Sigmoid colon (tissue), 7 donors: ENCODE measurements at regions of chr14 and their contacts with region 1.

Region 1: DNA sequence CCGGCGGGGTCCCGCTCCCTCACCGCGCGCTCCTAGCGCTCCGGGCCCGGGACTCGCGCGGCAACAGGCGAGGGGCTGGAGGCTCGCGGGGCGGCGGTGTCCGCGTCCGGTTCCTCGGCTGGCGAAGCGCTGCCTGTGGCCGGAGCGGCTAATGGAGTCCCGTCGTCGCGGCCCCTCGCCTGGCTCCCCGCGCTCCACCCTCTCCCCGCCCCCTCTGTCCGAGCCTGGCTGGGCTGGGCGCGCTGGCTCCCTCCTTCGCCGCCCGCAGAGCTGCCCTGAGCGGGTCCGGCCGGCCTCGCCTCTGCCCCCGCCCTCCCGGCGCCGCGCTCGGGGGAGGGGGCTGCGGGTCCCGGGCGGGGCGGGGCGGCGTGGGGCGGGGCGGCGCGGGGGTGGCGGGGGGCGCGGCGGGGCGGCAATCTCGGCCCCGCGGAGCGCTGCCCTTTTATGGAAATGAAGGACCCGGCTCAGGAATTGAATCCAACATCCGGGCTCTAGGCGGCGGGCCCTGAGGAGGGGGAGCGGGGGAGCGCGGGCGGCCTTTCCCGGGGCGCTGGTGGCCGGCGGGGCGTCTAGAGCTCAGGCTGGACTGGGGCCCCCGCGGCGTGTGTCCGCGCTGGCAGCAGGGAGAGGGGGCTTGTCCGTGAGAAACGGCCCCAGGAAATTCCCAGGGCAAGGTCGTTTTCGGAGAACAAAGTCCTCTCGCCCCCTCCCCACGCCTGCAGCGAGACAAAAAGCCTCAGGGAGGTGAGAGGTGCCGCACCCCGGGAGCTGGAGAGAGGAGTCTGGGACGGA is at the start of gene FERMT2:
- DNase-seq: peak; percentile 96
- H3K4me3 ChIP-seq: peak within 1 kb of the TSS; percentile 73 to 98 (median 90)
- H3K27ac ChIP-seq: peak within 1 kb of the TSS; percentile 98 to 100 (median 99)
- H3K4me1 ChIP-seq: peaks cover 0 to 59% (median 45%) of the 10 kb centered on the region in 4 donors
- H3K27me3 ChIP-seq: no peaks in the 10 kb centered on the region
- CTCF ChIP-seq: no peak
- EP300 ChIP-seq: peak in 1 of 4 donors; percentile 46
- POLR2A ChIP-seq: peak; percentile 82 to 92
- total RNA-seq, gene FERMT2: 278 to 317 (median 297) TPM

Region 2: GRCh38 chr14:52678591-52678990 is 272.5 kb before region 1 on chr14:
- intact Hi-C with region 1: no loop called
- DNase-seq: no peak
- H3K4me3 ChIP-seq: no peak overlapping the region
- H3K27ac ChIP-seq: no peak overlapping the region
- H3K4me1 ChIP-seq: no peaks in the 10 kb centered on the region
- H3K27me3 ChIP-seq: no peaks in the 10 kb centered on the region
- CTCF ChIP-seq: peak in 1 of 4 experiments; percentile 12
- EP300 ChIP-seq: no peak
- POLR2A ChIP-seq: no peak

Region 3: GRCh38 chr14:52706724-52707706 is 244.1 kb before region 1 on chr14 and contains the start of gene PSMC6:
- intact Hi-C with region 1: loop called (anchors 10 kb)
- DNase-seq: peak; percentile 96
- H3K4me3 ChIP-seq: peak within 1 kb of the TSS; percentile 68 to 81 (median 74)
- H3K27ac ChIP-seq: peak within 1 kb of the TSS; percentile 86 to 87 (median 87)
- H3K4me1 ChIP-seq: peaks cover 0 to 29% (median 16%) of the 10 kb centered on the region in 4 donors
- H3K27me3 ChIP-seq: no peaks in the 10 kb centered on the region
- CTCF ChIP-seq: no peak
- EP300 ChIP-seq: peak in 1 of 4 donors; percentile 21
- POLR2A ChIP-seq: peak; percentile 16 to 67
- total RNA-seq, gene PSMC6: 60.7 to 94.2 (median 86.4) TPM

Region 4: DNA sequence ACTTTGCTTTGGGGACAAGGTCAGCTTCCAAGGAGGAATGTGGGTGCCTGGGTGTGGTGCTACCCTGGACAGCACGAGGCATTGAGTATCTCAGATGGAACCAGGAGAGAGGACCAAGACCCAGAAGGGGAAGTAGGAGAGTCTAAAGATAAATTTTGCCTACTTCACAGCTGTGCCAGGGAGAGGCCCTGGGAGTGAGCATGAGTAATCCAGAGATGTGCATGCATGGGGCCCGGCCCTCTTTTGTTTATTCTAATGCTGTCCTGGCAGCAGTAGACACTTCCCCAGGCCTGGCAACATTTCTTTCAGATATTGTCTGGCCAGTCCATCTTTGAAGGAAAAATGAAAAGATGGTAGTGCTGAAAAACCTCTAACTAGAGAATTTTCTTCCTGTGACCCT is 110.2 kb before region 1 on chr14:
- intact Hi-C with region 1: loop called (anchors 5 kb)
- DNase-seq: peak; percentile 74
- H3K4me3 ChIP-seq: no peak overlapping the region
- H3K27ac ChIP-seq: peak overlapping the region in 2 of 4 donors; percentile 48 to 59
- H3K4me1 ChIP-seq: peaks cover 0 to 23% (median 22%) of the 10 kb centered on the region in 4 donors
- H3K27me3 ChIP-seq: no peaks in the 10 kb centered on the region
- CTCF ChIP-seq: no peak
- EP300 ChIP-seq: no peak
- POLR2A ChIP-seq: no peak

Region 5: DNA sequence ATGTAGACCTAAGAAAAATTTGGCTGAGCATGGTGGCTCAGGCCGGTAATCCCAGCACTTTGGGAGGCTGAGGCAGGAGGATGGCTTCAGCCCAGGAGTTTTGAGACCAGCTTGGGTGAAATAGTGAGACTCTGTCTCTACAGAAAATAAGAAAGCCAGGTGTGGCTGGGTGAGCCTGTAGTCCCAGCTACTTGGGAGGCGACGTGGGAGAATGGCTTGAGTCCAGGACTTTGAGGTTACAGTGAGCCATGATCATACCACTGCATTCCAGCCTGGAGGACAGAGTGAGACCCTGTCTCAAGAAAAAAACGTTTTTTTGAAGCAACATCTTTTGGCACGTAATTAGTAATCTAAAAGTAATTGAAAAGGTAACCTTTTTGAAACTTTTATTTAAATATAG is 71.1 kb before region 1 on chr14:
- intact Hi-C with region 1: loop called (anchors 5 kb)
- DNase-seq: no peak
- H3K4me3 ChIP-seq: no peak overlapping the region
- H3K27ac ChIP-seq: peak overlapping the region; percentile 44 to 63 (median 48)
- H3K4me1 ChIP-seq: peaks cover 0 to 61% (median 38%) of the 10 kb centered on the region in 4 donors
- H3K27me3 ChIP-seq: no peaks in the 10 kb centered on the region
- CTCF ChIP-seq: no peak
- EP300 ChIP-seq: no peak
- POLR2A ChIP-seq: no peak

Region 6: GRCh38 chr14:52906071-52906601 is 45.0 kb before region 1 on chr14:
- intact Hi-C with region 1: loop called (anchors 5 kb)
- DNase-seq: no peak
- H3K4me3 ChIP-seq: no peak overlapping the region
- H3K27ac ChIP-seq: peak overlapping the region; percentile 53 to 71 (median 64)
- H3K4me1 ChIP-seq: peaks cover 0 to 73% (median 56%) of the 10 kb centered on the region in 4 donors
- H3K27me3 ChIP-seq: no peaks in the 10 kb centered on the region
- CTCF ChIP-seq: no peak
- EP300 ChIP-seq: no peak
- POLR2A ChIP-seq: no peak